ENCODE measurements at regions of chr15 and their contacts with region 1.

Region 1: GRCh38 chr15:96728591-96728990 is 398.1 kb downstream of the NR2F2 start:
- DNase-seq: no peak
- H3K4me3 Mint-ChIP-seq: no peak overlapping the region
- H3K27ac Mint-ChIP-seq: no peak overlapping the region
- H3K4me1 Mint-ChIP-seq: no peaks in the 10 kb centered on the region
- H3K27me3 Mint-ChIP-seq: peaks cover 80% of the 10 kb centered on the region
- CTCF ChIP-seq: no peak

Region 2: DNA sequence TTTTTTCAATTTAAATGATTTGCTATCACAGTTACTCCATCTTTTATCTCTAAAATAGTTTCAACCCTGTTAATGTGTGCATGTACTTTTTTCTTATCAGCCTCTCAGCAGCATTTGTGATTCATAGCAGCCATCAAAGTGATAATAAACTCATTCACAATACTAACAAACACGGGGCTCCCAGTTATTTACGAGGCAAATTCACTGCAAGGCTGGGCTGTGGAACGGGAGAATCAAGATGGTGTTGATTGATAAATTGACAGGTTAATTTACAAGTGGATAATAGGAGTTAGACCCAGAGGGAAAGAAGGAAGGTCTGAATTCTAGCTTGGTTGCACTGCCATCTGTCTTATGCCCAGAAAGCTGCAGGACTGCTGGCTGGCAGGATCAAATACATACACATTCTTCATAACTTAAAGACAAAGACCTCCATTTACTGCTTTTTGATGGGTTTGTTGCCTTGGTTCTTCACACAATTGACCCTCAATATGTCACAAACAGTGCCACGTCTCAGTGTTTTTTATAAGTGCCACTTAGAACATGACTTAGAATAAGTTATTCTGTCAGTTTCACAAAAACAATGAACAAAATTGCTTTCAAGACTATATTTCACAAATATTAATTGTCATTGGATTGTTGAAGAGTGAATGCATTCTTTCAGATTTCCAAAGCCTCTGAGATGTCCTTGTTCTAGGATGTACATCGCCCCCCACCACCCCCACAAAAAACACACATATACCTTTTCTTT is 164.7 kb after region 1 on chr15:
- CTCF ChIA-PET with region 1: interaction called, 3 read pairs
- POLR2A ChIA-PET with region 1: no interaction called
- intact Hi-C with region 1: loop called (anchors 5 kb)
- DNase-seq: peak; percentile 49
- H3K4me3 Mint-ChIP-seq: no peak overlapping the region
- H3K27ac Mint-ChIP-seq: no peak overlapping the region
- H3K4me1 Mint-ChIP-seq: peaks cover 9% of the 10 kb centered on the region
- H3K27me3 Mint-ChIP-seq: no peaks in the 10 kb centered on the region
- CTCF ChIP-seq: peak; percentile 62

Measured in MCF 10A (cell line).